Calu3 (cell line): ENCODE measurements at regions of chr10 and their contacts with region 1.

Region 1: GRCh38 chr10:21099291-21100062 is 202.4 kb upstream of the NEBL start:
- DNase-seq: no peak
- H3K4me3 Mint-ChIP-seq: no peak overlapping the region
- H3K27ac Mint-ChIP-seq: peak overlapping the region; percentile 57
- H3K4me1 Mint-ChIP-seq: peaks cover 41% of the 10 kb centered on the region
- H3K27me3 Mint-ChIP-seq: no peaks in the 10 kb centered on the region
- CTCF ChIP-seq: no peak

Region 2: GRCh38 chr10:21110358-21110757 is 10.9 kb after region 1 on chr10:
- CTCF ChIA-PET with region 1: no interaction called
- intact Hi-C with region 1: no loop called
- DNase-seq: no peak
- H3K4me3 Mint-ChIP-seq: no peak overlapping the region
- H3K27ac Mint-ChIP-seq: no peak overlapping the region
- H3K4me1 Mint-ChIP-seq: no peaks in the 10 kb centered on the region
- H3K27me3 Mint-ChIP-seq: no peaks in the 10 kb centered on the region
- CTCF ChIP-seq: no peak

Region 3: DNA sequence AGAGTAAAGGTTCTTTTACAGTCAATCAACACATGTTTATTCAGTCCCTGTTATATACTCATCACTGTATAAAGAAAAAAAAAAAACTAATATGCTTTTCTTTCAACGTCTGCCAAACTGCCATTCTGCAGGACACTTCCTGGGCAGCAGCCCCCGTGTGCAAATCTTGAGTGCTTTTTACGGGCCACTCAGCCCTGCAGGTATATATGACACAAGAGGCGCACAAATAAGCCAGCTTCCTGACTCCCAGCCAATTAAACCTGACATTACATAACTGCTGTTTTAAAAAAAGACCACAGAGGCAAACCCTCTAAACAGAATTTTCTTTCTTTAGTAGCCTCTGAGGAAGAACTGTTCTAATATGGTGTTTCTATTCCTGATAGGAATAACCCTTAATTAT is 60.6 kb after region 1 on chr10:
- CTCF ChIA-PET with region 1: no interaction called
- intact Hi-C with region 1: loop called (anchors 5 kb)
- DNase-seq: no peak
- H3K4me3 Mint-ChIP-seq: no peak overlapping the region
- H3K27ac Mint-ChIP-seq: no peak overlapping the region
- H3K4me1 Mint-ChIP-seq: peaks cover 25% of the 10 kb centered on the region
- H3K27me3 Mint-ChIP-seq: no peaks in the 10 kb centered on the region
- CTCF ChIP-seq: no peak